Head of caudate nucleus (tissue), 42 donors: ENCODE measurements at regions of chr13 and their contacts with region 1.

Region 1: GRCh38 chr13:51632591-51633362 is 48.5 kb downstream of the WDFY2 start:
- DNase-seq: peak; percentile 69 to 95 (median 87)

Region 2: GRCh38 chr13:51729866-51730546 is 97.2 kb after region 1 on chr13:
- intact Hi-C with region 1: loop called (anchors 10 kb)
- DNase-seq: no peak